ENCODE measurements at regions of chr10 and their contacts with region 1.

Region 1: DNA sequence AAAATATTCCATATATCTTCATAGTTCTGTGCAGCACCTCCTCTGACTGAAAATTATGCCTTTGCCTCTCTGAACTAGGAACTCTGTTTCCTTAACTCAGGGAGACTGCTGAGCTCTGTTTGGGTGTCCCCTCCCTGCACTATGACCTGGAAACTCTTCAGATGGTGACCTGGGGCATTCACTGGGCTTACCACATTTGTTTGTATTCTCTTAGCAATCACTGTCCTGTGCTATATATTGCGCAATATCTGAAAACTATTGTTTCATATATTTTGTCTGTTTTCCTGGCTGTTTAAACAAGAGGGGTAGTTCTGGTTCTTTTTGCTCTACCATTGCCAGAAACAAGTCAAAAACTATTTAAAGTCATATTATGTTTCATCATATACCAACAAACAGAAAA is 181.8 kb upstream of the KIAA1217 start:
- DNase-seq: no peak

Region 2: DNA sequence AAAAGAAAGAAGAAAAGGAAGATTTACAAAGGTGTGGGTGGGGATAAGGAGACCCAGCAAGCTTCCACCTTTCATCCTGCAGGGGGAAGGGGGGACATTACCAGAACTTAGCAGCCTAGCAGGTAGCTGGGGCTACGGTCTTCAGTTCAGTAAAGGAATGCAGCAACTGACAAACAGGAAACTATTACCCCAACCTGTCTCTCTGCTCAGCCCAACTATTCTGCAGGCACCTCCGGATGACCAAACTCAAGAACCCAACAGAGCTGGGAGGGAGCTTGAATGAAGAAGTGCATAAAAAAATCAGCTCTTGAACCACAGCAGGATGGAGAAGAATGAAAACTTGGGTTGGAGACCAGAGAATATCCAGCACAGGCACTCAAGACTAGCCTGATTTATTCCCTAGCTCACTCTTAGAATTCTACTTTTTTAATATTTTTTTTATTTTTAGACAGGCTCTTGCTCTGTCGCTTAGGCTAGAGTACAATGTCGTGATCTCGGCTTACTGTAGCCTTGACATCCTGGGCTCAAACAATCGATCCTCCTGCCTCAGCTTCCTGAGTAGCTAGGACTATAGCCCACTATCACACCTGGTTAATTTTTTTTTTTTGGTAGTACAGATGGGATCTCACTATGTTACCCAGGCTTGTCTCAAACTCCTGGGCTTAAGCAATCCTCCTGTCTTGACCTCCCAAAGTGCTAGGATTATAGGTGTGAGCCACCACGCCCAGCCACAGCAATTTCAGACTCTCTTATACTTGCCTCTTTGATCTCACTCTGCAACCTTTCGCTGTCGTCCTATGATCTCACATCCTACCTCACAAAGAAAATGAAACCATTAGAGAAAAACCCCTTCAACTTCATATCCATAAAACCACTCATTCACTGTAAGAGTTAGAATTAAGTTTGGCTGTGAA is 664.0 kb before region 1 on chr10:
- intact Hi-C with region 1: no loop called
- DNase-seq: no peak

Region 3: GRCh38 chr10:25547382-25547781 is 1520.3 kb after region 1 on chr10:
- intact Hi-C with region 1: loop called in 1 of 2 experiments (anchors 5 kb)
- DNase-seq: no peak

Measured in posterior vena cava (tissue), 2 donors.